Natural killer cell (primary cell): ENCODE measurements at regions of chr11 and their contacts with region 1.

Region 1: GRCh38 chr11:65637794-65638317 is at the start of gene SIPA1:
- DNase-seq: peak; percentile 86 to 88
- ATAC-seq: peak; percentile 41 to 62 (median 49)
- H3K4me3 ChIP-seq: peak within 1 kb of the TSS; percentile 98
- H3K4me3 Mint-ChIP-seq: peak within 1 kb of the TSS; percentile 95
- H3K27ac ChIP-seq: peak within 1 kb of the TSS; percentile 98
- H3K27ac Mint-ChIP-seq: peak within 1 kb of the TSS; percentile 98 to 99
- H3K4me1 ChIP-seq: peaks cover 83% of the 10 kb centered on the region
- H3K4me1 Mint-ChIP-seq: peaks cover 52 to 64% of the 10 kb centered on the region in 2 donors
- H3K27me3 ChIP-seq: no peaks in the 10 kb centered on the region
- H3K27me3 Mint-ChIP-seq: no peaks in the 10 kb centered on the region
- CTCF ChIP-seq: peak; percentile 20
- total RNA-seq, gene SIPA1: 520 to 776 (median 743) TPM

Region 2: DNA sequence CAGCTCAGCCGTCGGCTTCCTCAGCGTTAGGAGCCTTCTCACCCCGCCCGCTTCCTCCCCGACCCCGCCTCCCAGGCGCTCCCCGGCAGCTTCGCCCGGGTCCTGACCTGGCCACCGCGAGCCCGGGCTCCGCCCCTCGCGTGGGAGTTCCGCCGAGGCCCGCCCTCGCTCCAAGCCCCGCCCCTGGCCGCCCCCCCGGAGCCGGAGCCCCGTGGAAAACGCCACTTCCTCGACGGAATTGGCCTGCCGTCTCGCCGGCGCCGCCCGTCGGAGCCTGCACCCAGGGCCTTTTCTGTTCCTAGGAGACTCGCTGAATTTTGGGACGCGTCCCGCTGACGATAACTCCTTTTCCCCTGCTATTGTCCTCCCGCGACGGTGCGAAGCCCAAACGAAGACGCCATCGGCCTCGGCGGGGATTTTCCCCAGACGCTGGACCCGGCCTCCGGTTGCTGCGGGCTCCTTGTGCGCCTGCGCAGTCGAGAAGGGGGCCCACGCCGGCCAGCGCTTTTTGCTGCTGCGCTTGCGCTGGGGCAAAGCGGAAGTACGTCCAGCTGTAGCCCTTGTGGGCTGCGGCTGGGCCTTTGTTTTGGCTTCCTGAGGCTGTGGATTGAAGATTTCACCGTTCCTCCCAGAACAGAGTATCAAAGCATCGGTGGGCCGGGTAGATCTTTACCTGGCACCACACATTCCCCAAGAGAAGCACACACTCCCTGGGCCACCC is 14.8 kb after region 1 on chr11:
- intact Hi-C with region 1: loop called (anchors 1 kb)
- DNase-seq: peak; percentile 98
- ATAC-seq: peak; percentile 78 to 95 (median 80)
- H3K4me3 ChIP-seq: peak overlapping the region; percentile 54
- H3K4me3 Mint-ChIP-seq: peak overlapping the region; percentile 95
- H3K27ac ChIP-seq: peak overlapping the region; percentile 95
- H3K27ac Mint-ChIP-seq: peak overlapping the region; percentile 97 to 99
- H3K4me1 ChIP-seq: peaks cover 49% of the 10 kb centered on the region
- H3K4me1 Mint-ChIP-seq: peaks cover 51 to 73% of the 10 kb centered on the region in 2 donors
- H3K27me3 ChIP-seq: no peaks in the 10 kb centered on the region
- H3K27me3 Mint-ChIP-seq: no peaks in the 10 kb centered on the region
- CTCF ChIP-seq: no peak

Region 3: GRCh38 chr11:65662799-65663638 is 25.2 kb after region 1 on chr11 and contains the start of gene RELA:
- intact Hi-C with region 1: loop called (anchors 1 kb)
- DNase-seq: peak; percentile 89 to 94
- ATAC-seq: peak; percentile 83 to 92 (median 84)
- H3K4me3 ChIP-seq: peak within 1 kb of the TSS; percentile 95
- H3K4me3 Mint-ChIP-seq: peak within 1 kb of the TSS; percentile 92
- H3K27ac ChIP-seq: peak within 1 kb of the TSS; percentile 98
- H3K27ac Mint-ChIP-seq: peak within 1 kb of the TSS; percentile 92 to 93
- H3K4me1 ChIP-seq: peaks cover 46% of the 10 kb centered on the region
- H3K4me1 Mint-ChIP-seq: peaks cover 18 to 29% of the 10 kb centered on the region in 2 donors
- H3K27me3 ChIP-seq: no peaks in the 10 kb centered on the region
- H3K27me3 Mint-ChIP-seq: no peaks in the 10 kb centered on the region
- CTCF ChIP-seq: no peak
- total RNA-seq, gene RELA: 319 to 380 (median 338) TPM

Region 4: GRCh38 chr11:65711785-65712632 is 74.2 kb after region 1 on chr11 and contains the start of gene KAT5:
- intact Hi-C with region 1: loop called (anchors 5 kb)
- DNase-seq: peak; percentile 99
- ATAC-seq: peak; percentile 84 to 90 (median 85)
- H3K4me3 ChIP-seq: peak within 1 kb of the TSS; percentile 95
- H3K4me3 Mint-ChIP-seq: peak within 1 kb of the TSS; percentile 94
- H3K27ac ChIP-seq: peak within 1 kb of the TSS; percentile 99
- H3K27ac Mint-ChIP-seq: peak within 1 kb of the TSS; percentile 95 to 99
- H3K4me1 ChIP-seq: peaks cover 17% of the 10 kb centered on the region
- H3K4me1 Mint-ChIP-seq: peaks cover 0 to 22% of the 10 kb centered on the region in 2 donors
- H3K27me3 ChIP-seq: no peaks in the 10 kb centered on the region
- H3K27me3 Mint-ChIP-seq: no peaks in the 10 kb centered on the region
- CTCF ChIP-seq: peak; percentile 94
- total RNA-seq, gene KAT5: 140 to 155 (median 146) TPM